Common myeloid progenitor, CD34-positive (primary cell): ENCODE measurements at regions of chr6 and their contacts with region 1.

Region 1: GRCh38 chr6:41936073-41936837 is 5.4 kb downstream of the CCND3 start:
- DNase-seq: peak; percentile 96 to 99 (median 99)
- H3K4me3 ChIP-seq: peak overlapping the region in 3 of 7 experiments; percentile 46 to 55 (median 55)
- H3K27ac ChIP-seq: peak overlapping the region in 1 of 2 experiments; percentile 54
- H3K4me1 ChIP-seq: peaks cover 28 to 72% (median 68%) of the 10 kb centered on the region in 4 experiments
- H3K27me3 ChIP-seq: no peaks in the 10 kb centered on the region

Region 2: GRCh38 chr6:41966961-41967311 is 30.7 kb after region 1 on chr6:
- CTCF ChIA-PET with region 1: interaction called, 10 read pairs
- POLR2A ChIA-PET with region 1: interaction called, 3 read pairs
- DNase-seq: peak; percentile 25 to 59 (median 49)
- H3K4me3 ChIP-seq: no peak overlapping the region
- H3K27ac ChIP-seq: peak overlapping the region in 1 of 2 experiments; percentile 52
- H3K4me1 ChIP-seq: peaks cover 5 to 22% (median 12%) of the 10 kb centered on the region in 4 experiments
- H3K27me3 ChIP-seq: no peaks in the 10 kb centered on the region

Region 3: DNA sequence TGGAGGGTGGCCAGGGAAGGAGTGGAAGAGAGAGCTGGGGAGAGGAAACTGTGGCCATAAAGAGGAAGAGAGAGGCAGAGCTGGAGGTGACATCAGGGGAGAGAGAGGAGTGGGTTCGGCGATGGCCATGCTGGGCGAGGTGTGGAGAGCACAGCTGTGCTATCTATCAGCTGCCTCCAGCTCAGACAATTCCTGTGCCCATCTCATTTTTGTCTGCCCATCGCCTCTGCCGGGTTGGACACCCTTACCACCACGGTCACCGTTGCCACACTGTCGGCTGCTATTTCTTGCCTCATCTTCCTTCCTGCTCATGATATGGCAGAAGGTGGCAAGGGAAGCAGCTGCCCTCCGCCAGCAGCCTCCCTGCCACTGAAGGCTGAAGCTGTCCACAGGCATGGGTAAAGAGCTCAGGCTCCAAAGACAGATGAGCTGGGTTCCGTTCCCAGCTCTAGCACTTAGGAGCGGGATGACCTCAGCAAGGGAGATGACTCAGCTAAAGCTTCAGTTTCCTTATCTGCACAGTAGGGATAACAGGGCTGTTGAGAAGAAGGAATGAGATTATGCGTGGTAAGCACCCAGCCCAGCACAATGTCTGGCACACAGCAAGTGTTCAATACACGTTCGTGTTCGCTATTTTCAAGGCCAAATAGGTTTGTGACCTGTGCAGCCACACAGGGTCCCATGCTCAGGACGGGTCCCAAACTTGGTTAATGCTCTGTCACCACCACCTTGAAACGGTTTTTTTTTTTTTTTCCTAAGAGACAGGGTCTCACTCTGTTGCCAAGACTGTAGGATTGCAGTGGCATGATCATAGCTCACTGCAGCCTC is 92.2 kb after region 1 on chr6:
- CTCF ChIA-PET with region 1: interaction called, 16 read pairs
- POLR2A ChIA-PET with region 1: interaction called, 3 read pairs
- DNase-seq: peak; percentile 75 to 89 (median 86)
- H3K4me3 ChIP-seq: peak overlapping the region in 3 of 7 experiments; percentile 19 to 40 (median 29)
- H3K27ac ChIP-seq: peak overlapping the region in 1 of 2 experiments; percentile 81
- H3K4me1 ChIP-seq: peaks cover 8 to 73% (median 59%) of the 10 kb centered on the region in 4 experiments
- H3K27me3 ChIP-seq: no peaks in the 10 kb centered on the region